ENCODE measurements at regions of chr16 and their contacts with region 1.

Region 1: GRCh38 chr16:71610936-71611871 is 14.8 kb upstream of the MARVELD3 start:
- DNase-seq: peak; percentile 37
- ATAC-seq: peak; percentile 98
- H3K4me3 ChIP-seq: no peak overlapping the region
- H3K27ac ChIP-seq: no peak overlapping the region
- H3K4me1 ChIP-seq: no peaks in the 10 kb centered on the region
- H3K27me3 ChIP-seq: peaks cover 8% of the 10 kb centered on the region
- CTCF ChIP-seq: peak; percentile 85
- POLR2A ChIP-seq: no peak
- RAD21 ChIP-seq: peak; percentile 65

Region 2: DNA sequence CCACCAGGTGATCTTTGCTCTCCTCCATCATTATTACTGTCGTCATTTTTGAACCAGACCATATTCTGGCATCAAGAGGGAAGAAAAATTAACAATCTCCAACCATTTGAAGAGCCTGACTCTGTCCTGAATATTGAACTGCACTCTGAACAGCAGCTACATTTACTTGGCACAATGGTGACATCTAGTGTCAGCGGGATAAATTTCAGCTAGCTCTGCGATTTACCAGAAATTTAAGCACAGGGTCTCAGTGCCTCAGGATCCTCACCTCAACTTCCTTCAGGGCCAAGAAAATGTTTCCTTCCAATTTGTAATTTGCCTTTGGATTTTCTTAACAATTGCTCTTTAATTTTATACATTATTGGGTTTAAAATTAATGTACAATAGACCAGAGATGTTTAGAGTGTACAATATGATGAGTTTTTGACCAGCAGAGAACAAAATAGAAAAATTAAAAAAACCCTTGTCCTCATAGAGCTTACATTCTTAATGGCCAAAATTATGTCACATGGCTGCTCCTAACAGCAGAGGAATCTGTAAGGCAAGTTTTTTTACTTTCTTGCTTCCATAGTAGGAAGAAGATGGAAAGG is 111.3 kb before region 1 on chr16:
- CTCF ChIA-PET with region 1: interaction called, 6 read pairs
- POLR2A ChIA-PET with region 1: no interaction called
- dilution Hi-C with region 1: no loop called
- in situ Hi-C with region 1: no loop called
- intact Hi-C with region 1: loop called (anchors 10 kb)
- DNase-seq: peak; percentile 66
- ATAC-seq: peak; percentile 97
- H3K4me3 ChIP-seq: no peak overlapping the region
- H3K27ac ChIP-seq: no peak overlapping the region
- H3K4me1 ChIP-seq: no peaks in the 10 kb centered on the region
- H3K27me3 ChIP-seq: no peaks in the 10 kb centered on the region; the same call in none of the 2 replicates
- CTCF ChIP-seq: peak; percentile 82
- POLR2A ChIP-seq: no peak
- RAD21 ChIP-seq: peak; percentile 89

Region 3: DNA sequence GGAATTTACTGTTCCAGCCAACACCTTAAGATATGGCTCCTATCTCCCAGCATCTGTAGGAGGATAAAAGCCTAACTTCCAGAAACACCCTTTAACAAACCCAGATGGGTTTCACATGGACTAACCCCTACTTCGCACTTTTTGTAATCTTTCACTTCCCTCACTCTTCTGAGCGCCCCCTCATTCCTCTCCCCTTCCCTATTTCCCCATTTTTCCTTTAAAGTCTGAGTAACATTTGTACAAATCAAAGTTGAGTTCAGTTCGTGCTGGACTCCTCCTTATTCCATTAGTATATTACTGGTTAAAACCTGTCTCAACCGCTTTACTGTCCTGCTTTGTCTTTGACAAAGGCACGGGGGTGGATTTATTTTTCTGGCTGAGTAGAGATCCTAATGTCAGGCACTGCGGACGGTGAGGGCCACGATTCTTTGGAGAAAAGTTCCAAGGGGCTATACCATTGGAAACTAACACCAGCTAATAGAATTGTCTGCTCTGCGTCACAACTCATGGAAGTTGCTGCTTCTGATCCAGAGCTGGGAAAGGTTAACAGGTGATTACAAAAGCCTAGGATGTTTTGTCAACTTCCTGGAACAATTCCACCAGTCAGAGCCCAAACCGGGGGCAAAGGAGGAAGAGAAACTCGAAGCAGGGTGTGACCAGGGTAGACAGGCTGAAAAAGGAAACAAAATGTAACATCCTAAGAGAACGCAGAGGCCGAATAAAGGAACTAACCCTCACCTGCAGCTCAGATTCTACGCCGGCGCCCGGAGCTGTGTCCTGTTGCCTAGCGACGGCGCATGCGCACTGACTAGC is 46.8 kb before region 1 on chr16:
- CTCF ChIA-PET with region 1: interaction called, 6 read pairs
- POLR2A ChIA-PET with region 1: no interaction called
- dilution Hi-C with region 1: no loop called
- in situ Hi-C with region 1: no loop called
- intact Hi-C with region 1: loop called (anchors 2 kb)
- DNase-seq: no peak
- ATAC-seq: no peak
- H3K4me3 ChIP-seq: peak overlapping the region; percentile 48
- H3K27ac ChIP-seq: no peak overlapping the region
- H3K4me1 ChIP-seq: no peaks in the 10 kb centered on the region
- H3K27me3 ChIP-seq: no peaks in the 10 kb centered on the region; the same call in 1 of the 2 replicates
- CTCF ChIP-seq: no peak
- POLR2A ChIP-seq: no peak
- RAD21 ChIP-seq: no peak

Region 4: DNA sequence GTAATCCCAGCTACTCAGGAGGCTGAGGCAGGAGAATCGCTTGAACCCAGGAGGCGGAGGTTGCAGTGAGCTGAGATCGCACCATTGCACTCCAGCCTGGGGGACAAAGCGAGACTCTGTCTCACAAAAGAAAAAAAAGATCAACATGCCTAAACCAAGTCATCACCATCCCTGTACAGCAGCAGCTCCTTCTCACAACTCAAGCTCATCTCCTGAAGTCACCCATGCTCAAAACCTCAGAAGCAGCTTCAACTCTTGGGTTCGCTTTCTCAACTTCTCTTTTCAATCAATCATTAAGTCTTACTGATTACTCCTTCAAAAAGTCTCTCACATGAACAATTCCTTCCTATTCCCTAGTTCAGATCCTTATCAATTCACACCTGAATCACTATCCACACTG is 82.0 kb after region 1 on chr16:
- CTCF ChIA-PET with region 1: no interaction called
- POLR2A ChIA-PET with region 1: no interaction called
- dilution Hi-C with region 1: no loop called
- in situ Hi-C with region 1: no loop called
- intact Hi-C with region 1: no loop called
- DNase-seq: no peak
- ATAC-seq: no peak
- H3K4me3 ChIP-seq: no peak overlapping the region
- H3K27ac ChIP-seq: no peak overlapping the region
- H3K4me1 ChIP-seq: no peaks in the 10 kb centered on the region
- H3K27me3 ChIP-seq: no peaks in the 10 kb centered on the region
- CTCF ChIP-seq: no peak
- POLR2A ChIP-seq: no peak
- RAD21 ChIP-seq: no peak

Region 5: DNA sequence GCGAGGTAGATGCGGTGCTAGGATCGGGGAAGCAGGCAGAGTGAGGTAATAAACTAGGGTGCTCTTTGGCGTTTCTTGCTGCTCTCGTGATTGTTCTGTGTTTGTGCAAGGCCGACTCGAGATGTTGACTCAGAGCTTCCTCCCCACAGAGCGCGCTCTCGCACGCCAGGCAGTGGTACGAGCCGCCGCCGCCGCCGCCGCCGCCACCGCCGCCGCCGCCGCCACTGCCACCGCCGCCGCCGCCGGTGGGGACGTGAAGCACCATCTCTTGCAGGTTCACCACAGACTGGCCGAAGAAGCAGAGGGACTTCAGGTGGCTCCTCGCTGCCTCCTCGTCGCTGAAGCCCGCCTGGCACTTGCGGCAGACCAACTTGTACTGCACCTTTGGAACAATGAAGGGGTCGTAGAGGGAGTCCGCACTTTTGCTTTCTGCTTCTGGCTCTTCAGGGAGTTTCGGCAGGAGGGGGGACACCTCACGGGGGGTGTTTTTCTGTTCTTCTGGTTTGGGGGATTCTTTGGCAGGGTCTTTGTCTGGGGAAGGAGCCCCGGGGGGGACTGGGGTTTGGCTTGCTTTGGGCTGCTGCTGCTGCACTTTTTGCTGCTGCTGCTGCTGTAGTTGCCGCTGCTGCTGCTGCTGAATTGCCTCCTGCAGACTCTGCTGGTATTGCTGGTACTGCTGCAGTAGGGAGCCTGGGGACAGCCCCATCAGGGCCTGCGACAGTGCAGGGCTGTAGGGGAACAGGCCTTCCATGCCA is 1176.5 kb after region 1 on chr16:
- CTCF ChIA-PET with region 1: no interaction called
- POLR2A ChIA-PET with region 1: no interaction called
- dilution Hi-C with region 1: no loop called
- in situ Hi-C with region 1: no loop called
- intact Hi-C with region 1: no loop called
- DNase-seq: peak; percentile 94
- ATAC-seq: peak; percentile 87
- H3K4me3 ChIP-seq: peak overlapping the region; percentile 76
- H3K27ac ChIP-seq: peak overlapping the region; percentile 85
- H3K4me1 ChIP-seq: peaks cover 7% of the 10 kb centered on the region
- H3K27me3 ChIP-seq: no peaks in the 10 kb centered on the region
- CTCF ChIP-seq: no peak
- POLR2A ChIP-seq: no peak
- RAD21 ChIP-seq: no peak

Measured in IMR-90 (cell line).